AG04449 (cell line): ENCODE measurements at regions of chr5 and their contacts with region 1.

Region 1: GRCh38 chr5:141691867-141692532 is 10.0 kb upstream of the ARAP3 start:
- DNase-seq: no peak
- H3K4me3 ChIP-seq: peak overlapping the region; percentile 61
- CTCF ChIP-seq: peak; percentile 99

Region 2: GRCh38 chr5:141664732-141665461 is 27.1 kb before region 1 on chr5:
- CTCF ChIA-PET with region 1: interaction called, 36 read pairs
- POLR2A ChIA-PET with region 1: no interaction called
- DNase-seq: no peak
- H3K4me3 ChIP-seq: no peak overlapping the region
- CTCF ChIP-seq: peak; percentile 90

Region 3: DNA sequence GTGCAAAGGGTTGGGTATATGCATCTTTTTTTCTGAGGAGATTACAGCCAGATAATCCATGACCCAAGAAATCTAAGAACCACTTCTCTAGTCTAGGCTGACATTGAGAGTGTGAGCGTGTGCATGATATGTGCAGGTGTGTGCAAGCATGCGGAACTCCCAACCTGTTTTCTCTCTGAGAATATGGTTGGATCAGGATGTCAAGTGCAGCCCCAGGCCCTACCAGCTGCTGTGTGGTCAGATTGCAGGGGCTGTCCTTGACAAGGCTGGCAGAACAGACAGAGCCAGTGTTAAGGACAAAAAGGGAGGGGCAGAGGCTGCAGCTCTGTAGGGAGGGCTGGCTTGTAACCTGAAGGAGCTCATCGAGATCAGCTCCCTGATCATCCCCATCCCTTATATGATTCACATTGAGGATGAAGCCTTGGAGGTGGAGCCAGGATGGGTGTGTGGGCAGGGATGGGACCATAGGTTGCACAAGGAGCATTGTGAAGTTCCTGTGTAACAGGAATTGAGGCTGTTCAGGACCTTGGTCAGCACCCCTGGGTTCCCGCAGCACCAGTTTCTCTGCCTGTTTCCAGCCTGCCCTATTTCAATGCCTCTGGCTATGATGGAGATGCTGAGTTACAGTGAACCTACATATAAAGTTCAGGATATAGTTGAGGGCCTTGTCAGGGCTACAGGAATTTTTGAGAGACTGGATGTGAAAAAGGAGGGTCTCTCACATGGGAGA is 42.7 kb after region 1 on chr5:
- CTCF ChIA-PET with region 1: no interaction called
- POLR2A ChIA-PET with region 1: no interaction called
- DNase-seq: no peak
- H3K4me3 ChIP-seq: no peak overlapping the region
- CTCF ChIP-seq: no peak

Region 4: GRCh38 chr5:141825791-141826560 is 134.0 kb after region 1 on chr5:
- CTCF ChIA-PET with region 1: interaction called, 16 read pairs
- POLR2A ChIA-PET with region 1: no interaction called
- DNase-seq: no peak
- H3K4me3 ChIP-seq: no peak overlapping the region
- CTCF ChIP-seq: no peak

Region 5: GRCh38 chr5:141914199-141914743 is 222.3 kb after region 1 on chr5:
- CTCF ChIA-PET with region 1: interaction called, 31 read pairs
- POLR2A ChIA-PET with region 1: no interaction called
- DNase-seq: no peak
- H3K4me3 ChIP-seq: peak overlapping the region; percentile 37
- CTCF ChIP-seq: peak; percentile 26

Region 6: GRCh38 chr5:141940695-141941271 is 248.8 kb after region 1 on chr5:
- CTCF ChIA-PET with region 1: interaction called, 50 read pairs
- POLR2A ChIA-PET with region 1: interaction called, 3 read pairs
- DNase-seq: no peak
- H3K4me3 ChIP-seq: no peak overlapping the region
- CTCF ChIP-seq: no peak

Region 7: DNA sequence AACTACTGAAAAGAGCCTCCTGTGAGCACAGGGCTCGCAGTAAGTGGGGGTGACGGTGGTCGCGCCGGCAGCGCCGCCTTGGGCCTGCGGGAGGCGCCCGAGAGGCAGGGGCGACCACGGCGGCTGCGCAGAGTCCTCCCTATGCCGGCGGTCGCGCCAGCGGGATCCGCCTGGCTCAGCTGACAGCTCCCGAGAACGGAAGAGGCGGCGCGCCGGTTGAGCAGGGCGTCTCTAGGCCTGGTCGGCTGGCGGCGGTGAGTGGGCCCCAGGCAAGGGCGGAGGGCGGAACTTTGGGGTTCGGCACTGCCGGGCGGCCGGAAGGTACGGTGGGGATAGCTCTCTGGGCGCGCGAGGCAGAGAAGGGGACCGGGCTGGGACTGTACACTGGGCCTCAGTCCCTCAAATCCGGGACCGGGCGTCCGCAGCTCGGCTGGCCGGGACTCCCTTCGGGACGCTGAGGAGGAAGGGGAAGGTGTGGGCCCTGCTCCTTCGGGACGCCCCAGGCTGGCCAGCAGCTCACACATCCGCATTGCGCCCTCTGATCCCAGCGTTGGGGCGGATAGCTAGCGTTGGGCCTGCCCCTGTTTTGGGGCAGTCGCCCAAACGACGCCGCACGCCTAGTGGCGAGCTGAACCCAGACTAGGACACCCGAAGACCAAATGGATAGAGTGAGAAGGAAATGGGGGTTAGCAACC is 277.1 kb after region 1 on chr5 and contains the start of gene RNF14:
- CTCF ChIA-PET with region 1: interaction called, 828 read pairs
- POLR2A ChIA-PET with region 1: no interaction called
- DNase-seq: peak; percentile 28
- H3K4me3 ChIP-seq: peak within 1 kb of the TSS; percentile 88
- CTCF ChIP-seq: peak; percentile 88

Region 8: GRCh38 chr5:142145106-142145900 is 453.3 kb after region 1 on chr5:
- CTCF ChIA-PET with region 1: interaction called, 14 read pairs
- POLR2A ChIA-PET with region 1: no interaction called
- DNase-seq: no peak
- H3K4me3 ChIP-seq: no peak overlapping the region
- CTCF ChIP-seq: peak; percentile 72

Region 9: DNA sequence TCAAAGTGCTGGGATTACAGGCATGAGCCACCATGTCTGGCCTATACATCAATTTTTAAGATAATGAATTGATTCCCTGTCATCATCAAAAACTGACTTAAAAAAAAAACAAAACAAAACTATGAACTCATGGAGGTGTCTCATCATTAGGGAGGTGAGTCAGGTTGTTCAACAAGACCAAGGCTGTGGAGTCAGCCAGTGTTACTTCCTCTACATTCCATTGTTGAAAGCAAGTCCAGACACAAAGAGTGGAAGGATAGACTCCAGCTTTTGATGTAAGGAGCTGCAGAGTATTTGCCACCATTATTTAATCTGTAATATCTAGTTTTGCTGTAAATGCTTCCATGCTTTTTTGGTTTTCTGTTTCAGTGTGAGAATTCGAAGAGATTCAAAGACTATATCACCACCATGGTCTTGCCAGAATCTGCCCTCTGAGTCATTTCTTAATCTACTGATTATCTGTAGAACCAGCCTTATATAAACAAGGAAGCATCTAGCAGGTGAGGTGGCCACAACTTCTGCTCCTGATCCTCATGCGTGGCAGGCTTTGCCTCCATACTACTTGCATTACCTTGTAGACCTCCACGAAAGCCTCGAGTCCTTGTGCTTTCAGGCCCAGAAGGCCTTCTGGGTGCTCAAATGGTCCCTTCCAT is 837.8 kb after region 1 on chr5:
- CTCF ChIA-PET with region 1: no interaction called
- POLR2A ChIA-PET with region 1: no interaction called
- DNase-seq: peak; percentile 12
- H3K4me3 ChIP-seq: no peak overlapping the region
- CTCF ChIP-seq: no peak